ENCODE measurements at regions of chr18 and their contacts with region 1.

Region 1: GRCh38 chr18:80175451-80176204 is 66.6 kb downstream of the ADNP2 start:
- DNase-seq: no peak
- ATAC-seq: peak in 1 of 8 donors; percentile 22
- H3K4me3 ChIP-seq: no peak overlapping the region
- H3K27ac ChIP-seq: peak overlapping the region in 1 of 10 donors; percentile 10
- H3K4me1 ChIP-seq: peaks cover 0 to 11% (median 7%) of the 10 kb centered on the region in 9 donors
- H3K27me3 ChIP-seq: peaks cover 0 to 5% (median 0%) of the 10 kb centered on the region in 7 donors
- CTCF ChIP-seq: no peak

Region 2: DNA sequence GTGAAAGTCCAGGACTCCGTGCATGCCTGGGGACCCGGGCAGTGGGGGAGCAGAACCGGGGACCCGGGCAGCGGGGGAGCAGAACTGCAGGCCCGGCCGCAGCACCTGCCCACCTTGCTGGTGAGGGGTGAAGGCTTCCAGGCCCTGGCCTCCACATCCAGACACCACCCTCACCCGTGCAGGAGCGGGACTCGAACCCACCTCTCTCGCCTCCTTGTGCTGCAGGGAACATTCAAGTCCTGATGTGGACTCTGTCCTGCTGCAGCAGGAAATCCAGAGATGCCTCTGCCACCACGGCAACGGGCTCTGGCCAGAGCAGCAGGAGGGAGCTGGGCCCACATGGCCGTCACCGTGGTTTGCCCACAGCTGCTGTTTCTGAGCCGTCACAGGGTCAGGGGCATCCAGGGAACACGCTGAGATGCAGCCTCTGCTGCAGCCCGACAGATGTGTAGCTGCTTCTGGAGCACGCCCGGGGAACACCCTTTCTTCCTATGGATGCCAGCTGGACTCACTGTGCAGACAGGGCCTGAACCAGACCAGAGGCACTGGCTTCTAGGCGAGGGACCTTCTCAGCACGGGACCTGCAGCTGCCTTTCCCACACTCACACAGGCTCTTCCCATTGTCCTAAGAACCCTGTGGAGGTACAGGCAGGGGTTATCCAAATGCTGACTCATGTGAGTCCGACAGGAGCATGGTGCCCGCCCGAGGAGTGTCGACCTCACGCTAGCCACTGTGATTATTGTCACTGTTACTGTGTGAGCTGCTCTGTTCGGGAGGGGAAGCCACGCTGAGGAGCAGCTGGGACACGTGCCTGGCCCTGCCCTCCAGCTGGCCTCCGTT is 585.2 kb before region 1 on chr18:
- intact Hi-C with region 1: no loop called
- DNase-seq: no peak
- ATAC-seq: peak in 1 of 8 donors; percentile 15
- H3K4me3 ChIP-seq: no peak overlapping the region
- H3K27ac ChIP-seq: peak overlapping the region in 2 of 10 donors; percentile 68 to 83
- H3K4me1 ChIP-seq: peaks cover 0 to 40% (median 18%) of the 10 kb centered on the region in 9 donors
- H3K27me3 ChIP-seq: peaks cover 0 to 16% (median 4%) of the 10 kb centered on the region in 7 donors
- CTCF ChIP-seq: no peak

Region 3: DNA sequence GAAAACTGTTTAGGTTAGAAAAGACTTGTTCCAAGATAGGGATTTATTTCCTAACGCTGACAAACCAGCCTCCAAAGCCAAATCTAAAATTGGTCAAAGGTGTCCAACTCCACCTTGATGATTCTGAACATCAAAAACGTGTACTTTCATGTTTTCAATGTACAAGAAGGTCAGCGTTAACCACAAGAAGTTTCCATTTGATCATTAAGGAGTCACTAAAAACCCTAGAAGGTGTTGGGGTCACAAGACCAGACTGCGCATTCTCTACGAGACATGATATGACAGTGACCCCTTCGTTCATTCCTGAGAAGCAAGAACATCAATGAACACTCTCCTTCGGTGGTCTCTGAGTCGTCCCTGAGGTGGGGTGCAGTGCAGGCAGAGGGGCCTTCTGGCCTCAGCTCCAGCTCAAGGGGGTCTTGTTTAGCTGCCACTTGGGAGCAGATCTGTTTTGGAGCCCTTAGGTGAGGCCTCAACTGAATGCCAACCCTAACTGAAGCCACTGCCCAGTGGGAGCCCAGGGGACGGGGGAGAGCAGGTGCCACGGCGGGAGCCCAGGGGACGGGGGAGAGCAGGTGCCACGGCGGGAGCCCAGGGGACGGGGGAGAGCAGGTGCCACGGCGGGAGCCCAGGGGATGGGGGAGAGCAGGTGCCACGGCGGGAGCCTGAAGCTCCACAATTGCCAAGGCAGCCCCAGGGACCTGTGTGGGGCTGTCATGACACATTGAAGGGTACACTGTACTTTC is 16.5 kb after region 1 on chr18:
- intact Hi-C with region 1: no loop called
- DNase-seq: no peak
- ATAC-seq: no peak
- H3K4me3 ChIP-seq: no peak overlapping the region
- H3K27ac ChIP-seq: no peak overlapping the region
- H3K4me1 ChIP-seq: peaks cover 0 to 3% (median 0%) of the 10 kb centered on the region in 9 donors
- H3K27me3 ChIP-seq: peaks cover 0 to 18% (median 0%) of the 10 kb centered on the region in 7 donors
- CTCF ChIP-seq: no peak

Region 4: DNA sequence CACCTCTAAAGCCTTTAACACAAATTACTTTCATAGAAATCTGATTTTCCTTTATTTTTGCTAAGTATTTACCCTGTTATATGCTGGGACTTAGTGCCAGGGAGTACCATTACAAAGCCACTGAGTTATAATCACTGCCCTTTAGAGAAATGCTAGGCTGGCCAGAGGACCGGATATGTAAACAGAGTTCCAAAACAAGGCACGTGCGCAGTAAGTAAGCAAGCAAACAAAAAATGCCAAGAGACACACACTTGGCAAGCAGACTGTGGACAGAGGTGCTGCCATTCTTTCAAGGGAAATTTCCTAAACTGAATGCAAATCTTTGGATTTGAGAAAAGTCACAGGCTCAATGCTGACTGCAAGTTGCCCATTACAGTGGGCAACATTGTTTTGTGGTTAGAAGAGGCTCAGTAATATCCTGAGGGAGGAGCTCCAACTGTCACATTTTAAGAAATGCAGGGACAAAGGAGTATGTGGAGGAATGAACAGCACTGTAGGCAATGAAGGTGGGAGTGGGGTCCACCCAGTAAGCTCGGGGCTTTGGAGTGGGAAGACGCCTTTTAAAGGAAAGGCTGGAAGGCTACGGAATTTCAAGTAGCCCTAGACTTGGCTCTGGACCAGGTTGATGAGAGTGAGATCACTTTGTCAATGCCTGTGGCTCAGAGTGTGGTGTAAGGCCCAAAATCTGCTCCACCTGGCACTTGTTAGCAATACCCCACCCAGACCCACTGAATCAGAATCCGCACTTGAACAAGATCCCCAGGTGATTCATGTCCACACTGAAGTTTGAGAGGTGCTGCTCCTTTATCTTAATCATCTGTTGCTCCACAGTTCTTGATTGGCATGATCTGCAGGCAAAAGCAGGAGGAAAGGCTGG is 73.8 kb after region 1 on chr18:
- intact Hi-C with region 1: loop called in 1 of 10 experiments (anchors 2 kb)
- DNase-seq: no peak
- ATAC-seq: no peak
- H3K4me3 ChIP-seq: no peak overlapping the region
- H3K27ac ChIP-seq: no peak overlapping the region
- H3K4me1 ChIP-seq: peaks cover 0 to 16% (median 10%) of the 10 kb centered on the region in 9 donors
- H3K27me3 ChIP-seq: peaks cover 0 to 33% (median 7%) of the 10 kb centered on the region in 7 donors
- CTCF ChIP-seq: no peak